Left lung (tissue), 14 donors: ENCODE measurements at regions of chr4 and their contacts with region 1.

Region 1: GRCh38 chr4:21512353-21512752 is 436.2 kb downstream of the KCNIP4 start:
- DNase-seq: peak in 2 of 4 donors; percentile 26 to 51
- ATAC-seq: peak; percentile 78
- H3K4me3 ChIP-seq: no peak overlapping the region
- H3K27ac ChIP-seq: no peak overlapping the region
- H3K4me1 ChIP-seq: no peaks in the 10 kb centered on the region
- H3K27me3 ChIP-seq: no peaks in the 10 kb centered on the region
- CTCF ChIP-seq: no peak

Region 2: GRCh38 chr4:20676501-20677197 is 835.7 kb before region 1 on chr4:
- intact Hi-C with region 1: no loop called
- DNase-seq: no peak
- ATAC-seq: no peak
- H3K4me3 ChIP-seq: no peak overlapping the region
- H3K27ac ChIP-seq: no peak overlapping the region
- H3K4me1 ChIP-seq: no peaks in the 10 kb centered on the region
- H3K27me3 ChIP-seq: no peaks in the 10 kb centered on the region
- CTCF ChIP-seq: no peak

Region 3: DNA sequence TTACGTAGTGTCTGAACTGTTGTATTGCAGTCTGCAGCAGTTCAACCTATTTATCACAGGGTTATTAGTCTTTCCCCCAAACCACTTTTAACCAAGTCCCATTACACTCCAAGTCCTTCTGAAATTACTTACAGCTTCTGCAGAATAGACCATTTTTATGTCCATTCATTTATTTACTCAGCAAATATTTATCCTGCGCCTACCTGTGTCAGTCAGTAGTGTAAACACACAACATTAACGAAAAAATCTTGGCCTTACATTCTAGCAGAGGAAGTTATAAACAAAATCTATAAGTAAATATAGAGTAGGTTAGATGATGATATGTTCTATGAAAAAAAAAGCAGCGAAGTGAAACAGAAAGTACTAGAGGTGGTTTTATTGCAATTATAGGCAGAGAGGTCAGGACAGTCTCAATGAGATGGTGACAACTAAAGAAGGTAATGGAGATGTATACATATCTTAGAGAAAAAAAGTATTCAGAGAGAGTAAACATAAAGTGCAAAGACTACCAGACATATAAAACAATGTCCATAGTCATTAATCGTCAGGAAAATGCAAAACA is 98.5 kb before region 1 on chr4:
- intact Hi-C with region 1: no loop called
- DNase-seq: no peak
- ATAC-seq: no peak
- H3K4me3 ChIP-seq: no peak overlapping the region
- H3K27ac ChIP-seq: no peak overlapping the region
- H3K4me1 ChIP-seq: no peaks in the 10 kb centered on the region
- H3K27me3 ChIP-seq: peaks cover 0 to 5% of the 10 kb centered on the region in 2 donors
- CTCF ChIP-seq: no peak

Region 4: GRCh38 chr4:21765810-21766407 is 253.6 kb after region 1 on chr4:
- intact Hi-C with region 1: loop called in 1 of 2 experiments (anchors 5 kb)
- DNase-seq: peak in 1 of 4 donors; percentile 44
- ATAC-seq: peak; percentile 95
- H3K4me3 ChIP-seq: no peak overlapping the region
- H3K27ac ChIP-seq: no peak overlapping the region
- H3K4me1 ChIP-seq: no peaks in the 10 kb centered on the region
- H3K27me3 ChIP-seq: no peaks in the 10 kb centered on the region
- CTCF ChIP-seq: peak; percentile 65 to 86

Region 5: GRCh38 chr4:22372986-22373385 is 860.6 kb after region 1 on chr4:
- intact Hi-C with region 1: no loop called
- DNase-seq: no peak
- ATAC-seq: no peak
- H3K4me3 ChIP-seq: no peak overlapping the region
- H3K27ac ChIP-seq: no peak overlapping the region
- H3K4me1 ChIP-seq: no peaks in the 10 kb centered on the region
- H3K27me3 ChIP-seq: no peaks in the 10 kb centered on the region
- CTCF ChIP-seq: no peak